Common myeloid progenitor, CD34-positive (primary cell): ENCODE measurements at regions of chr2 and their contacts with region 1.

Region 1: DNA sequence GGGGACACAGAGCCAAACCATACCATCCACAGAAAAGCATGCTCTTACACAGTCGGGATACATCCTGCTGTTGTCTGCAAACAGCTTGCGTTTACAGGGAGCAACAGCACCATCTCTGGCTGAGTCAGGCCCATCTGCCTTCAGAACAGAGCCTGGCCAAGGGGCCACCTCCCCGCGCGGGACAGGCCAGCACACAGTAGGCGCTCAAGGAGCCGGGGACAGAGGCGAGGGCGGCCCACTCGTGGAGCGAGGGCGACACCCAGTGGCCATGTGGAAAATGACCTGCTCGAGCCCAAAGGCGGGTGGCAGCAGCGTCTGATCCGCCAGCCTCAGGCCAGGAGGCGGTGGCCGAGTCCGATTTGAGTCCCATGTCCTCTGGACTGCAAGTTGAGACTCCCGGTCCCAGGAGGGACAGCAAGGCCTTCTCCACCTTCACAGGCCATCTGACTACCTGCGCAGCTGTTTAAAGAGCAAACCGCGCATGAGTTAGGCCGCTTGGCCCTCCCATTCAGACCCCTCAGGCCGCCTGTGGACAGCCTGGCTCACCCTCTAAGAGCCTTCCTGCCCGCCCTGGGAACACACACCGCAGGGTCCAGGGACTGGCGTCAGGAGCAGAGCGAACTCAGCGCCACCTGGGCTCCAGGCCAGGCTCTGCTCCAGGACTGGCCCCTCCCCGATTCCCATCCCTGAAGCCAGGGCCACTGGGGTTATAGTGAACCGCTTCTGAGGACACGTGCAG is 38.3 kb downstream of the TTC32 start:
- DNase-seq: peak; percentile 30 to 58 (median 50)
- H3K4me3 ChIP-seq: peak overlapping the region in 1 of 7 experiments; percentile 37
- H3K27ac ChIP-seq: no peak overlapping the region
- H3K4me1 ChIP-seq: peaks cover 0 to 9% (median 6%) of the 10 kb centered on the region in 4 experiments
- H3K27me3 ChIP-seq: peaks cover 0 to 11% (median 5%) of the 10 kb centered on the region in 5 experiments

Region 2: GRCh38 chr2:18520451-18521425 is 1342.7 kb before region 1 on chr2:
- CTCF ChIA-PET with region 1: interaction called, 24 read pairs
- POLR2A ChIA-PET with region 1: no interaction called
- DNase-seq: peak; percentile 58 to 79 (median 74)
- H3K4me3 ChIP-seq: no peak overlapping the region
- H3K27ac ChIP-seq: no peak overlapping the region
- H3K4me1 ChIP-seq: peaks cover 0 to under 1% (median 0%) of the 10 kb centered on the region in 4 experiments
- H3K27me3 ChIP-seq: peaks cover 0 to 15% (median 9%) of the 10 kb centered on the region in 5 experiments

Region 3: DNA sequence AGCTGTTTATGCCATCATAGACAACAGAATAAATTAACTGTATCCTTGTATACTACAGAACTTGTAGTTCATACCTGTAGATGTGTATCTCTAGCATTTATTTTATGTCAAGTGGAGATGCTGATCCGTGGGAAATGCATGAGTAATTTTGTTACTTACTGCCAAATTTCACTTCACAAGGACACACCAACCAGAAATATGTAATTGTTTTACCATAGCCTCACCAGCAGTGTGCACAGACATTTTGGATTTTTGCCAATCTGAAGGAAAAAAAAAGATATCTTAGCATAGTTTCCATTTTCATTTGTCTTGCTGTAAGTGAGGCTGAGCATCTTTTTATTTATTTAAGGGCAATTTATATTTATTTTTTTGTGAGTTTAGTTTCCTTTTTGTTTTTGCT is 240.0 kb before region 1 on chr2:
- CTCF ChIA-PET with region 1: no interaction called
- POLR2A ChIA-PET with region 1: no interaction called
- DNase-seq: no peak
- H3K4me3 ChIP-seq: no peak overlapping the region
- H3K27ac ChIP-seq: no peak overlapping the region
- H3K4me1 ChIP-seq: no peaks in the 10 kb centered on the region
- H3K27me3 ChIP-seq: no peaks in the 10 kb centered on the region

Region 4: DNA sequence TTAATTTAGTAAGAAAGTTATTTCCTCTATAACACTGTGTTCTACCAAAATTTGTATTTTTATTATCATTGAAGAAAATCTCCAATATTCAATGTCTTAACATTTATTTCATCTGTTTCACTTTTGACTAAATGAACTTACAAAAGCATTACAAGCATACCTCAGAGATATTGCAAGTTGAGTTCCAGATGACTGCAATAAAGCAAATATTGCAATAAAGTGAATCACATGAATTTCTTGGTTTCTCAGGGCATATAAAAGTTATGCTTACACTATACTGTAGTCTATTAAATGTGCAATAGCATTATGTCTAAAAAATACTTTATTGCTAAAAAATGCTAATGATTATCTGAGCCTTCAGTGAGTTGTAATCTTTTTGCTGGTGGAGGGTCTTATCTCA is 40.0 kb before region 1 on chr2:
- CTCF ChIA-PET with region 1: no interaction called
- POLR2A ChIA-PET with region 1: no interaction called
- DNase-seq: no peak
- H3K4me3 ChIP-seq: no peak overlapping the region
- H3K27ac ChIP-seq: no peak overlapping the region
- H3K4me1 ChIP-seq: no peaks in the 10 kb centered on the region
- H3K27me3 ChIP-seq: peaks cover 0 to 9% (median 0%) of the 10 kb centered on the region in 5 experiments

Region 5: GRCh38 chr2:19851116-19851695 is 12.3 kb before region 1 on chr2:
- CTCF ChIA-PET with region 1: interaction called, 12 read pairs
- POLR2A ChIA-PET with region 1: no interaction called
- DNase-seq: no peak
- H3K4me3 ChIP-seq: no peak overlapping the region
- H3K27ac ChIP-seq: no peak overlapping the region
- H3K4me1 ChIP-seq: no peaks in the 10 kb centered on the region
- H3K27me3 ChIP-seq: peaks cover 0 to 3% (median under 1%) of the 10 kb centered on the region in 5 experiments

Region 6: DNA sequence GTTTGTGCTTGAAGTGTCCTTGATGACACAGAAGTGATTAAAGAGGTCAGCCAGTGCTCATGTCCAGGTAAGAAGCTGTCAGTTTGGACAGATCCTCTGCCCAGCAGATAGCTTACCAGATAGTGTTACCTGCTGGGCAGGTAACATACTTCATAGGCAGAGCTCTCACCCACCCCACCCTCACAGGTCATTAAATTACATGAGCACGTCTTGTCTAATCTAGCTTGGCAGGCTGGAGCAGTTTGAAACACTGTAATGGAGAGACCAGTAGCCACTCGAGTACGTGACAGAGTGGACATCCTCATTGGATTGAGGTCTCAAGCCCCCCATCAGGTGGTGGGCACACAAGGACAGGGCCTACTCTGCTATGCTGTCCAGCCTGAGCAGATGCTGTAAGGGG is 11.3 kb after region 1 on chr2:
- CTCF ChIA-PET with region 1: interaction called, 22 read pairs
- POLR2A ChIA-PET with region 1: no interaction called
- DNase-seq: no peak
- H3K4me3 ChIP-seq: no peak overlapping the region
- H3K27ac ChIP-seq: no peak overlapping the region
- H3K4me1 ChIP-seq: no peaks in the 10 kb centered on the region
- H3K27me3 ChIP-seq: no peaks in the 10 kb centered on the region

Region 7: DNA sequence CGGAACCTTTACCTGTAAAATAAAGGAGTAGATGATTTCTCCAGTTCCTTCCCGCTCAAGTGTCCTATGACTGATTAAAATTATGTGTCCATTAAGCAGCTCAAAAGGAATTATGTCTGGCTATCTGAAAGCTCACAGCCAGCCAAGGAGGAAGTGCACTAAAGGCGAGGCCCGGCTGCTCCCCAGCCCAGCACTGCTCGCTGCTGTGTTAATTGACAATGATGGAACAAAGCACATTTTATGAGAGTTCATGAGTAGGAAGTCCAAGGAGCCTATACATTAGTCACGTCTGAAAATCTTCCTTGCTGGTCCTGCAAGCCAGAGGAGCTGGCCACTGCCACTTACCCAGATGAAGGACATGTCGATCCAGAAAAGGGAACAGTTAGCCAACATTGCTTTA is 24.0 kb after region 1 on chr2:
- CTCF ChIA-PET with region 1: no interaction called
- POLR2A ChIA-PET with region 1: no interaction called
- DNase-seq: no peak
- H3K4me3 ChIP-seq: no peak overlapping the region
- H3K27ac ChIP-seq: no peak overlapping the region
- H3K4me1 ChIP-seq: peaks cover 0 to 11% (median 7%) of the 10 kb centered on the region in 4 experiments
- H3K27me3 ChIP-seq: no peaks in the 10 kb centered on the region

Region 8: GRCh38 chr2:19944205-19944845 is 80.9 kb after region 1 on chr2:
- CTCF ChIA-PET with region 1: no interaction called
- POLR2A ChIA-PET with region 1: no interaction called
- DNase-seq: no peak
- H3K4me3 ChIP-seq: no peak overlapping the region
- H3K27ac ChIP-seq: no peak overlapping the region
- H3K4me1 ChIP-seq: no peaks in the 10 kb centered on the region
- H3K27me3 ChIP-seq: no peaks in the 10 kb centered on the region